ENCODE measurements at regions of chr10 and their contacts with region 1.

Region 1: GRCh38 chr10:95133016-95133752 is 60.9 kb upstream of the ACSM6 start:
- DNase-seq: peak; percentile 53
- H3K4me3 ChIP-seq: no peak overlapping the region
- H3K27ac ChIP-seq: no peak overlapping the region
- H3K4me1 ChIP-seq: no peaks in the 10 kb centered on the region
- H3K27me3 ChIP-seq: no peaks in the 10 kb centered on the region
- CTCF ChIP-seq: peak; percentile 82 to 94 (median 88)

Region 2: GRCh38 chr10:94630017-94630688 is 503.0 kb before region 1 on chr10:
- dilution Hi-C with region 1: loop called (anchors 25 kb)
- DNase-seq: no peak
- H3K4me3 ChIP-seq: no peak overlapping the region
- H3K27ac ChIP-seq: no peak overlapping the region
- H3K4me1 ChIP-seq: peaks cover 6% of the 10 kb centered on the region
- H3K27me3 ChIP-seq: no peaks in the 10 kb centered on the region
- CTCF ChIP-seq: peak in 1 of 3 experiments; percentile 30